IMR-90 (cell line): ENCODE measurements at regions of chr6 and their contacts with region 1.

Region 1: GRCh38 chr6:72132427-72132826 is 246.1 kb downstream of the RIMS1 start:
- DNase-seq: no peak
- ATAC-seq: no peak
- H3K4me3 ChIP-seq: no peak overlapping the region
- H3K27ac ChIP-seq: no peak overlapping the region
- H3K4me1 ChIP-seq: peaks cover 1% of the 10 kb centered on the region
- H3K27me3 ChIP-seq: no peaks in the 10 kb centered on the region; the same call in 1 of the 2 replicates
- CTCF ChIP-seq: no peak
- POLR2A ChIP-seq: no peak
- RAD21 ChIP-seq: no peak

Region 2: GRCh38 chr6:72032086-72032485 is 100.3 kb before region 1 on chr6:
- CTCF ChIA-PET with region 1: no interaction called
- POLR2A ChIA-PET with region 1: no interaction called
- dilution Hi-C with region 1: no loop called
- in situ Hi-C with region 1: no loop called
- intact Hi-C with region 1: no loop called
- DNase-seq: no peak
- ATAC-seq: no peak
- H3K4me3 ChIP-seq: no peak overlapping the region
- H3K27ac ChIP-seq: no peak overlapping the region
- H3K4me1 ChIP-seq: no peaks in the 10 kb centered on the region
- H3K27me3 ChIP-seq: no peaks in the 10 kb centered on the region
- CTCF ChIP-seq: no peak
- POLR2A ChIP-seq: no peak
- RAD21 ChIP-seq: no peak

Region 3: GRCh38 chr6:72246926-72247325 is 114.5 kb after region 1 on chr6:
- CTCF ChIA-PET with region 1: no interaction called
- POLR2A ChIA-PET with region 1: no interaction called
- dilution Hi-C with region 1: no loop called
- in situ Hi-C with region 1: no loop called
- intact Hi-C with region 1: loop called (anchors 10 kb)
- DNase-seq: peak; percentile 15
- ATAC-seq: peak; percentile 49
- H3K4me3 ChIP-seq: no peak overlapping the region
- H3K27ac ChIP-seq: no peak overlapping the region
- H3K4me1 ChIP-seq: peaks cover 2% of the 10 kb centered on the region; the same call in 1 of the 2 replicates
- H3K27me3 ChIP-seq: no peaks in the 10 kb centered on the region
- CTCF ChIP-seq: no peak
- POLR2A ChIP-seq: no peak
- RAD21 ChIP-seq: no peak